WTC11 (cell line): ENCODE measurements at regions of chr20 and their contacts with region 1.

Region 1: DNA sequence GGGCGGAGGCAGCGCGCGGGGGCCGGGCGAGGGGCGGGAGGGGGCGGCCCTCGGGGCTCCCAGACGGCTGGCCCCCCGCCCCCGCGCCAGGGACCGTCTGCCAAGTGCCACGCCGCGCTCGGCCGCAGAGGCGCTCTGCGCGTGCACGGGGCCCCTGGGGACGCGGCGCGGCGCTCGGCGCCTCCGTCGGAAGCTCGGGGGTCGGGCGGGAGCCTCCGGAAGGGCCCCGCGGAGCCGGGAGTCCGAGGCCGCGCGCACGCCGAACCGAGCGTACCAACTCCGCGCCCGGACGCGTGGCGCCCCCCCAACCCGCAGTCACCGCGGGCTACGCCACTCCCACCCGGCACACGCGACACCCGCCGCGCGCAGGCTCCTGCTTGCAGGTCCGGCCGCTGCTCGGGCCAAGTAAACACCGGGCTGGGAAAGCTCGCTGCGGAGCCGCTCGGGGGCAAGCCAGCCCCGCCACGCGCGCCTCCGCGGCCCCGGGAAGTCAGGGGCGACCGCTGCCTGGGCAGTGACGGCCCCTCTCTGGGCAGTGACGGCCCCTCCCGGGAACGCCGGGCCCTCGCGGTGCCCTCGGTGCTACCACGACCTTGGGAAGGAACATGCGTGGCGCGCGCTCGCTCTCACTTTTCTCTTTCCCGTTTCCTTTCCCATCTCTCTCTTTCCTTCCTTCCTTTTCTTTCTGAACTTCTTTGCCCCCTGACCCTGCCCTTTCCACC is 384 bp upstream of the PREX1 start:
- DNase-seq: peak; percentile 81
- ATAC-seq: peak; percentile 54
- H3K4me3 Mint-ChIP-seq: peak overlapping the region; percentile 90
- H3K27ac Mint-ChIP-seq: no peak overlapping the region
- H3K4me1 Mint-ChIP-seq: peaks cover 29% of the 10 kb centered on the region
- H3K27me3 Mint-ChIP-seq: peaks cover 59% of the 10 kb centered on the region
- CTCF ChIP-seq: no peak

Region 2: GRCh38 chr20:48904365-48905296 is 76.4 kb after region 1 on chr20:
- CTCF ChIA-PET with region 1: interaction called, 21 read pairs
- POLR2A ChIA-PET with region 1: no interaction called
- DNase-seq: peak; percentile 70
- ATAC-seq: peak; percentile 88
- H3K4me3 Mint-ChIP-seq: peak overlapping the region; percentile 54
- H3K27ac Mint-ChIP-seq: no peak overlapping the region; the same call in 1 of the 2 replicates
- H3K4me1 Mint-ChIP-seq: peaks cover 7% of the 10 kb centered on the region
- H3K27me3 Mint-ChIP-seq: no peaks in the 10 kb centered on the region
- CTCF ChIP-seq: peak; percentile 81

Region 3: GRCh38 chr20:49054056-49054643 is 226.0 kb after region 1 on chr20:
- CTCF ChIA-PET with region 1: no interaction called
- POLR2A ChIA-PET with region 1: no interaction called
- DNase-seq: no peak
- ATAC-seq: no peak
- H3K4me3 Mint-ChIP-seq: no peak overlapping the region
- H3K27ac Mint-ChIP-seq: peak overlapping the region; percentile 56
- H3K4me1 Mint-ChIP-seq: peaks cover 45% of the 10 kb centered on the region
- H3K27me3 Mint-ChIP-seq: no peaks in the 10 kb centered on the region
- CTCF ChIP-seq: no peak